ENCODE measurements at regions of chr1 and their contacts with region 1.

Region 1: DNA sequence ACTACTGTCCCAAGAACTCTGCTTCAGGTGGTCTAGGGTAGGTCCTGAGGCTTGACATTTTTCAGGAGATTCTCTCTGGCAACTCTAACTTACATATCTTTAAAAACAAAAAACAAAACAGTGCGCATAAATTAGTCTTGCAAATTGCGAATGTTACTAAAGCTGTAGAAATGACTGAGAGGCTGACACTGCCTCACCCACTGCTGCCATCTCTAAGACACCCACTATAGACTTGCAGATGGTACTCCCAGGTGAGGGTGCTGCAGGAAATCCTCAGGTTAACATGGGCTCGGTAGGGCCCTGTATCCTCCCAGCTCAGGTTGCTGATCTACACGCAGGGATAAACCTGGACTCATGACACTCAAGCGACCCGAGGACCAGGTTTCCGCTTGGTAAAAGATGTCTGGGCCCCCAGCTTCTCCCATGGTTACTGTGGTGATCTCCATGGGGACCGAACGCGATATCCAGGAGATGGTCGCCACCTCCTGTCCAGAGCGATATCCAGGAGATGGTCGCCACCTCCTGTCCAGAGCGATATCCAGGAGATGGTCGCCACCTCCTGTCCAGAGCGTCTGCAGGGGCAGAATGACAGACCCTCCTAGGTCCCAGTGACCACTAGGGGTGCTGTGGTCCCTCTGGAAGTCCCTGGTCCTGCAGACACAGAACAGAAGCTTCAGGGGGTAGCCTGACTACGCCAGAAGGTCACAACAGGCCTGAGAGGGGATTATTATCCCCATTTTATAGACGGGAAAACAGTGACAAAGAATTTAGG is 16.2 kb upstream of the LY9 start:
- DNase-seq: peak; percentile 58
- ATAC-seq: peak; percentile 98
- H3K4me3 ChIP-seq: no peak overlapping the region
- H3K27ac ChIP-seq: no peak overlapping the region
- H3K4me1 ChIP-seq: no peaks in the 10 kb centered on the region
- H3K27me3 ChIP-seq: peaks cover 0 to 5% of the 10 kb centered on the region in 2 experiments; a peak in 2 of 5 replicates
- CTCF ChIP-seq: peak; percentile 75
- EP300 ChIP-seq: no peak
- POLR2A ChIP-seq: no peak
- RAD21 ChIP-seq: peak; percentile 17; the same call in 1 of the 2 replicates

Region 2: DNA sequence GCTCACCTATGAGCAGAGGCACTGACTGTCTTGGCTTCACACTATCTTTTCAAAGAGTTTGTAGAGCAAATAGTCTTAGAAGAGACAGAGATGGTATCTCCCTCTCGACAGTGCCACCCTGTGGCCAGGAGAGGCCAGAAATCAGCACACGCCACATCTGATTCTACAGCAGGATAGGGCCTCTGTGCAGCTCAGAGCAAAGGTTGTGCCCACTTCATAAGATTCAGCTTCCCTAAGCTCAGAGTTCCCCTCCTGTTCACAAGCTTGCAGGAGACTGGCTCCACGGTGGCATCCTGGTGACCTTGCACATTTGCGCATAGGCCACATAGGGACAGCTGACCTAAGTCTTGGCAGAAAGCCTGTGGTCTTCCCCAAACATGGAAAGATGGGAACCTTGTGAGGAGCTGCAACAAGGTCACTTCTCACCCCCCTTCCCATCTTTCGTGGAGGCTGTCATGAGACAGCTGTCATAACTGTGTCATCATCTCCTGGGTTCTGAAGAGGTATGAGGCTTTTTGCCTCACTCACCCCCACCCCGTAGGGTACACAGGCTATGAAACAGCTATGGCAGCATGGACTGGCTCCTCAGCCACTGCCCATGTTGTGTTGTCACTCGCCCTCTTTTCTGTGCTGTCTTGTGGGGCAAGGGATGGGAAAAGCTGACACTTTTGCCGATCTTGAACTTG is 171.8 kb after region 1 on chr1:
- CTCF ChIA-PET with region 1: no interaction called
- POLR2A ChIA-PET with region 1: no interaction called
- in situ Hi-C with region 1: no loop called
- intact Hi-C with region 1: loop called (anchors 2 kb)
- DNase-seq: peak; percentile 35
- ATAC-seq: peak; percentile 88
- H3K4me3 ChIP-seq: no peak overlapping the region
- H3K27ac ChIP-seq: no peak overlapping the region
- H3K4me1 ChIP-seq: peaks cover 28% of the 10 kb centered on the region
- H3K27me3 ChIP-seq: peaks cover 1 to 4% of the 10 kb centered on the region in 2 experiments; a peak in 1 of 5 replicates
- CTCF ChIP-seq: peak; percentile 85
- EP300 ChIP-seq: no peak
- POLR2A ChIP-seq: no peak
- RAD21 ChIP-seq: peak; percentile 52; the same call in 1 of the 2 replicates

Measured in HepG2 (cell line).